Activated CD8-positive, alpha-beta memory T cell treated with anti-CD3 and anti-CD28 coated beads, Interleukin-2, amount 10 ng/mL, durations not matched to agents 7 days and 5 days (primary cell): ENCODE measurements at regions of chr6 and their contacts with region 1.

Region 1: DNA sequence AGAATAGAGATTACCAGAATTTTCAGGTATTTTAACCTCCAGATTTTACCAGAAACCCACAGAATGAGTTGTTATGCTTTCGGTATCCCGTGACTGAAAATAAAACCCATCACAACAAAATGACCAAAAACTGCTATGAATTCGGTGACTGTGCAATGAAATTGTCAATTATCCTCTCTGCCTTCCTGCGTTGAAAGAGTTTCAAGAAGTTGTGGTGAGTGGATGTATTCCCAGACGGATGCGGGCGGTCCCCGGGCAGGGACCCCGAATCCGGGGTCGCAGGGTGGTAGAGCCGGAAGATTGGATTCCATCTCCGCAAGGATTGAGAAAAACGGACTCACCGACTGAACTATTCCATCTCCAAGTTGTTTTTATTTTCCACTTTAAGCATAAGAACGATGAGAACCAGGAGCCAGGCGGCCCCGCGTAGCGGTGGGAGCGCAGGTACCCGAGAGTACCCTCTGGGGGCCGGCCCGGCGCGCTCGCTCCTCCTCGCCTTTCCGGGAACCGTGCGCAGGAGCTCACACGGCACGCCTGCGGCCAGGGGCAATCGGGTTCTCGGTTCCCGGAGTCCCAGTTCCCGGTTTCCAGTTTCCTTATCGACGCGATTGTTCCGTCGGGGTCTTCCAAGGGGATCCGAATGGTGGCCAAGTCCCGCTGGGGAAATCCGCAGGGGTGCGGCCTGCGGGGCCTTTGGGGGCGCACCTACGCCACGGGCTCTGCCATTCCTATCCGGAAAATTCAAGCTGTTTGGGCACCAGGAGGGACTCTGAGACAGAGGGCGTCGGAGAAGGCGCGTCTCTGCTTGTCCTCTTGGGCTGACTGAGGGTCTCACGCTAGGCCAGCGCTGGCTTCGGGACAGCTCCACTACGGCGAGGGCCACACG is 104.9 kb upstream of the PRDM1 start:
- DNase-seq: peak; percentile 78
- ATAC-seq: peak; percentile 74
- H3K4me3 Mint-ChIP-seq: peak overlapping the region; percentile 95
- H3K27ac Mint-ChIP-seq: peak overlapping the region; percentile 95
- H3K4me1 Mint-ChIP-seq: peaks cover 81% of the 10 kb centered on the region
- H3K27me3 Mint-ChIP-seq: no peaks in the 10 kb centered on the region

Region 2: GRCh38 chr6:105992315-105992961 is 11.2 kb after region 1 on chr6:
- CTCF ChIA-PET with region 1: interaction called, 94 read pairs
- DNase-seq: peak; percentile 93
- ATAC-seq: peak; percentile 84
- H3K4me3 Mint-ChIP-seq: peak overlapping the region; percentile 83
- H3K27ac Mint-ChIP-seq: peak overlapping the region; percentile 94
- H3K4me1 Mint-ChIP-seq: peaks cover 65% of the 10 kb centered on the region
- H3K27me3 Mint-ChIP-seq: peaks cover 10% of the 10 kb centered on the region

Region 3: DNA sequence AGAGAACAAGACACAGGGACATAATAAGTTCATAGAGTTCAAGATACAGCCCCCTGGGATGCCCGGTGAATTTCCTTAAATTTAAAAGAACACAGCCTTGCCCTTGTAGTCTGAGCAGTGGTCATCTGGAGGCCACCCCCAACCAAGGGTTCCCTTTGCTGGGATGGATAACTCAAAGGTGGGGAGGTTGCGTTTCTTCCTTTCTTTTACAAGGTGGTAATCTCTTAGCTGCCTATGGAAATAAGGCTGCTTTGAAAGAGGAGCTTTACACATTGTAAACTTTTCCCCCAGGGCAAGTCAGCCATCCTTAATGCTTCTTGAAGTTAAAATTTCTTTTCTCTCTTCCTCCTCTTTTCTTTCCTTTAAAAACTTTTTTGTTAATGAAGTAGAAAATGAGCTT is 33.7 kb after region 1 on chr6:
- CTCF ChIA-PET with region 1: no interaction called
- DNase-seq: no peak
- ATAC-seq: no peak
- H3K4me3 Mint-ChIP-seq: no peak overlapping the region
- H3K27ac Mint-ChIP-seq: no peak overlapping the region
- H3K4me1 Mint-ChIP-seq: peaks cover 2% of the 10 kb centered on the region
- H3K27me3 Mint-ChIP-seq: peaks cover 9% of the 10 kb centered on the region

Region 4: DNA sequence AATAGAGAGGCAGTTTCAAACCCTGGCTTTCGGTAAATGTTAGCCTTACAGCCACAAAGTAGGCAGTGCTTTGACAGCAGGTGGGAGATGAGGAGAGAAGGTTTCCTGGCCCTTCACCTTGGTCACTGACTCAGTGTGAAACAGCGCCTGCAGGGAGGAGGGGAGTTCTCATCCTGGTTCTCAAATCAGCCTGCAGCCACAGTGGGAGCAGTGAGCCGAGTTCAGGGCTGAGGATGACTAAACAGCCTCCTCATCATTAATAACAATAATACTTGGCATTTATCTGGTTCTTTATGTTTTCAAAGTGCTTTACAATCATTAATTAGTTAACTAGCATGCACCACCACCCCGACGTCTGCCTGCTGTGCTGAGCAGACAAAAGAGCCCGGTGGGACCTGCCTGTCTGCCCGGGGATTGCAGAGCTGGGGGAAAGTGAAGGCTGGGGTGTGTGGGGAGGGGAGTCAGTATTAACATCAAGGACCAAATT is 164.5 kb after region 1 on chr6:
- CTCF ChIA-PET with region 1: no interaction called
- DNase-seq: peak; percentile 62
- ATAC-seq: no peak
- H3K4me3 Mint-ChIP-seq: no peak overlapping the region
- H3K27ac Mint-ChIP-seq: peak overlapping the region; percentile 53
- H3K4me1 Mint-ChIP-seq: peaks cover 87% of the 10 kb centered on the region
- H3K27me3 Mint-ChIP-seq: no peaks in the 10 kb centered on the region